Mucosa of descending colon (tissue), 3 donors: ENCODE measurements at regions of chr11 and their contacts with region 1.

Region 1: GRCh38 chr11:7548659-7549274 is 35.0 kb downstream of the PPFIBP2 start:
- DNase-seq: peak in 2 of 3 donors; percentile 78
- ATAC-seq: peak; percentile 92
- H3K4me3 ChIP-seq: no peak overlapping the region
- H3K4me1 ChIP-seq: peaks cover 5% of the 10 kb centered on the region
- CTCF ChIP-seq: peak; percentile 59

Region 2: DNA sequence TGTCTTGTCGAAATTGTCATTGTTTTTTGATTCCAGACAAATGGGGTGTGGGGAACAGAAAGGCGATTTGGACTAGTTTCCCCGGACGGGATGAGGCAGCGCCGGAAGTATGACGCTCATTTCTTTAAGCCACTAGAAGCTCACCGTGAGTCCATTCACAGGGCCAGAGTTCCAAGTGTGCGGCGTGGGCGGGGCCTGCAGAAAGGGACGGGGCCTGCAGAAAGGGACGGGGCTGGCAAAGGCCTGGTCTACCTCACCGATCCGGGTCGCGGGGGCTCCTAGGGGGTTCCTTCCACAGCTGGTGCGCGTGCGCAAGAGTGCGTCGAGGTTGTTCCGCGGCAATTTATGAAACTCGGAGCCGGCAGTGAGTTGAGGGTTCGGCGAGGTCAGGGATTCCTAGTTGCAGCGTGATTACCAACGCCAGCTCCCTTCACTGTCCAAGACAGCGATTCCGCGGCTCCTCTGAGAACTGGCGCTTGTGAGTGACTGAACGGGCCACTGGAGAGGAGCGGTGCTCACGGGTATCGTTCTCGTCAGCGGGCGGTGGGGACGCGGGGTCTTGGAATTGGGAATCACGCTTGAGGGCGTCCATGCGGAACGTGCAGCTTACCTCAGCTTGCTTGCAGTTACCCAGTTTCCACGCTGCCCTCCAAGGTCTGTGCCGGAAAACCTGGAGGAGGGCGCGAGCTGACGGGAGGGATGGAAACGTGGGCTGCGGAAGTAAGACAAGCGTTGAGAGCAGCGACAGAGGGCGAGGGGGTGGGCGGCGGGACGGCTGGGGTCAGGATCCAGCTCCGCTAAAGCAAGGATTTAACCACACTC is 622.3 kb before region 1 on chr11 and contains the start of gene ZNF215:
- intact Hi-C with region 1: no loop called
- DNase-seq: peak; percentile 89 to 90 (median 90)
- ATAC-seq: peak; percentile 95
- H3K4me3 ChIP-seq: peak within 1 kb of the TSS; percentile 73
- H3K4me1 ChIP-seq: peaks cover 7% of the 10 kb centered on the region
- CTCF ChIP-seq: no peak
- total RNA-seq, gene ZNF215: 3.0 to 7.5 (median 5.1) TPM

Region 3: DNA sequence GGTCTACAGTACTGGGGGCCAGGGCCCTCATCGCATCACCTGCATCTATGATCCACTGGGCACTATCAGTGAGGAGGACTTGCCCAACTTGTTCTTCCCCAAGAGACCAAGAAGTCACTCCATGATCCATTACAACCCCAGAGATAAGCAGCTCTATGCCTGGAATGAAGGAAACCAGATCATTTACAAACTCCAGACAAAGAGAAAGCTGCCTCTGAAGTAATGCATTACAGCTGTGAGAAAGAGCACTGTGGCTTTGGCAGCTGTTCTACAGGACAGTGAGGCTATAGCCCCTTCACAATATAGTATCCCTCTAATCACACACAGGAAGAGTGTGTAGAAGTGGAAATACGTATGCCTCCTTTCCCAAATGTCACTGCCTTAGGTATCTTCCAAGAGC is 38.8 kb before region 1 on chr11:
- intact Hi-C with region 1: loop called in 1 of 2 experiments (anchors 2 kb)
- DNase-seq: no peak
- ATAC-seq: no peak
- H3K4me3 ChIP-seq: no peak overlapping the region
- H3K4me1 ChIP-seq: peaks cover 30% of the 10 kb centered on the region
- CTCF ChIP-seq: no peak

Region 4: DNA sequence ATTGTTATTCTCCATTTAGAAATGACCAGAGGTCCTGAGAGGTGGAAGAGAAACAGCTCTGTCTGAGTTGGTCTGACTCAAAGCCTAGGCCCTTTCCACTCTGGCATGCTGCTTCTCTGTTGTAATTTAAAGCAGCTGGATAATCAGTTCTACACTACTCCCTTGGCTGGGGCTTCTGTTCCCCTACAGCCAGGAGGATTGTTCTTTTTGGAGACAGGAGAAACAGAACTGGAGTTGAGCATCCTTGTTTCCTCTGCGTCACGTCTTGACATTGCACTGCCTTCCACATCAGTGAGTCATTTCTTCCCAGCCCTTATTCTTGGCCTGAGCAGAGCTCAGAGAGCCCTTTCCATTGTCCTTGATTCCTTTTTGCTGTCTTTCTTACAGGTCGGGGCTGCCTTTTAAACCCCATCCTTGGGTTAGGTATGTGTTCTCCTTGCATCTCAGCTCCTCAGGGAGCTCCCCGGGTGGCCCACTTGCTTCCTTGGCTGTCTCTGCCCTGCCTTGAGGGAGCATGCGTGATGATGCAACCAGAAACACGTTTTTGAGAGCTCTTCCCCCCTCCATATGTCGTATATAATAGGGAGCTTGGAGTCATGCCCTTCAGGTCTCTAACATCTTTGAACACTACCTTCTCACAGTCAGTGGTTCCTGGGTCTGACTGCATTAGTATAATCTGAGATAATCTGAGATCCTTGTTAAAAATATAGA is 88.8 kb after region 1 on chr11:
- intact Hi-C with region 1: no loop called
- DNase-seq: no peak
- ATAC-seq: no peak
- H3K4me3 ChIP-seq: no peak overlapping the region
- H3K4me1 ChIP-seq: peaks cover 26% of the 10 kb centered on the region
- CTCF ChIP-seq: no peak

Region 5: GRCh38 chr11:8180469-8180868 is 631.7 kb after region 1 on chr11:
- intact Hi-C with region 1: no loop called
- DNase-seq: no peak
- ATAC-seq: no peak
- H3K4me3 ChIP-seq: no peak overlapping the region
- H3K4me1 ChIP-seq: no peaks in the 10 kb centered on the region
- CTCF ChIP-seq: no peak